ENCODE measurements at regions of chr10 and their contacts with region 1.

Region 1: DNA sequence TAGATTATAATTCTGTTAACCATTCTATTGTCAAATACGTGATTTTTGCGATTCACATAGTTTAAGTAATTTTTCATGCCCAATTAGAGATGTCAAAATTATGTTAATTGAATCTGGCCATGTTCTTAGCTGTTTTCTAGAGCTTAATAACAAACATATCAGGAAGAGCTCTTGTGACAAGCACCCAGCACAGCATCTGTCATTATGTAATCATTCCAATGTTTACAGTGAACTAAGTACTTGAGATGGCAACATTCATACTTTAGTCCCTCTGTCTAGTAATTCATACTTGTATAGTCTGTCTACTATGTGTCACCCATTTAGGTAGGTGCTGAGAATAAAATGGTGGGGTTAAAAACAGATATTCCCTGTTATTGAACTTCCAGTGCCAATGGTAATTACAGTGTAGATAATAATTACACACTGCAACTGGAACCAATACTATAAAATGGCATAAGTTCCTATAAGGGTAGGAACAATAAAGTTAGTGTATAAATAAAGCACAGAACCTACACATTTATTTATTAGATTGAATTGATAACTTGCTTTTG is 55.2 kb downstream of the ZEB1 start:
- DNase-seq: no peak
- ATAC-seq: peak in 2 of 8 donors; percentile 13 to 16
- H3K4me3 ChIP-seq: no peak overlapping the region
- H3K27ac ChIP-seq: no peak overlapping the region
- H3K4me1 ChIP-seq: peaks cover 0 to 55% (median 26%) of the 10 kb centered on the region in 9 donors
- H3K27me3 ChIP-seq: no peaks in the 10 kb centered on the region
- CTCF ChIP-seq: no peak

Region 2: DNA sequence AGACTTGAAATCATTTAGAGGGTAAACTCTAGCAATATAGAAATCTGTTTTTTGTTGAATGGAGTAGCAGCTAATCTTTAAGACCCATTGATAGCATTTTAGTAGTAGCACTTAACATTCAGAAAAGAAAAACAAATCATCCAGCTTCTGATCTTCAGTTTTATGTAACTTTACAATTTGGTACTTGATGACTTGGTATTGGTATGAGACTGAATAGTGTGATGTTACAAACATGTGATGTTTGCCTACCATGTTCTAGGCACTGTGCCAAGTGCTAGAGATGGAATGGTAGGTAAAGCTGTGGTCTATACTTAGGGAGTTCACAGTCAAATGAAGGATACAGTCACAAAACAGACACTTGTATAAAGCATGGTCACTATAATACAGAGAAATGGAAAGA is 33.9 kb before region 1 on chr10:
- intact Hi-C with region 1: no loop called
- DNase-seq: no peak
- ATAC-seq: peak in 2 of 8 donors; percentile 30 to 51
- H3K4me3 ChIP-seq: no peak overlapping the region
- H3K27ac ChIP-seq: peak overlapping the region in 1 of 10 donors; percentile 23
- H3K4me1 ChIP-seq: peaks cover 0 to 68% (median 32%) of the 10 kb centered on the region in 9 donors
- H3K27me3 ChIP-seq: no peaks in the 10 kb centered on the region
- CTCF ChIP-seq: no peak

Region 3: DNA sequence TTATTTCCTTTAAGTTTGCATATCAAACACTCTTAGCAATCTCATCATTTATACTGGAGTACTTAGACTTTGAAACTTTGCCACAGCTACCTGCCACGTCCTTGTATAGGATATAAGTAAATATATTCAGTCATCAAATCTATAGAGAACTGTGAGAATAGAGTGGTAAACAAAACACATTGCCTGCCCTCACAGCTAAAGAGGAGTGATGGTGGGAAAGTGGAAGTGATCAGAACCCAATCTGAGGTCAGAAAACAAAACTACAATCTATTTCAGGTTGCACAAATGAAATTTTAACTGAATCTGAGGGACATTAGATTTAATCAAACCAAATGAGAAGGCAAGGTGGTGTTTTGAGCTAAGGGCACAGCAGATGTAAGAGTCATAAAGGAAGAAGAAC is 19.6 kb after region 1 on chr10:
- intact Hi-C with region 1: loop called in 1 of 10 experiments (anchors 2 kb)
- DNase-seq: no peak
- ATAC-seq: no peak
- H3K4me3 ChIP-seq: no peak overlapping the region
- H3K27ac ChIP-seq: no peak overlapping the region
- H3K4me1 ChIP-seq: peaks cover 0 to 60% (median 25%) of the 10 kb centered on the region in 9 donors
- H3K27me3 ChIP-seq: no peaks in the 10 kb centered on the region
- CTCF ChIP-seq: no peak

Region 4: GRCh38 chr10:32023264-32023663 is 649.0 kb after region 1 on chr10:
- intact Hi-C with region 1: no loop called
- DNase-seq: no peak
- ATAC-seq: no peak
- H3K4me3 ChIP-seq: no peak overlapping the region
- H3K27ac ChIP-seq: no peak overlapping the region
- H3K4me1 ChIP-seq: no peaks in the 10 kb centered on the region
- H3K27me3 ChIP-seq: no peaks in the 10 kb centered on the region
- CTCF ChIP-seq: no peak

Measured in heart right ventricle (tissue), 16 donors.